ENCODE measurements at regions of chr7 and their contacts with region 1.

Region 1: GRCh38 chr7:103573479-103574058 is 127.6 kb upstream of the SLC26A5 start:
- DNase-seq: no peak
- H3K4me3 ChIP-seq: no peak overlapping the region
- H3K27ac ChIP-seq: no peak overlapping the region
- H3K4me1 ChIP-seq: peaks cover 0 to 6% (median 2%) of the 10 kb centered on the region in 4 donors
- H3K27me3 ChIP-seq: no peaks in the 10 kb centered on the region
- CTCF ChIP-seq: peak; percentile 54 to 69 (median 58)
- EP300 ChIP-seq: no peak
- POLR2A ChIP-seq: no peak

Region 2: GRCh38 chr7:104156842-104157277 is 583.3 kb after region 1 on chr7:
- in situ Hi-C with region 1: loop called in 1 of 4 experiments (anchors 25 kb)
- intact Hi-C with region 1: no loop called
- DNase-seq: no peak
- H3K4me3 ChIP-seq: no peak overlapping the region
- H3K27ac ChIP-seq: no peak overlapping the region
- H3K4me1 ChIP-seq: no peaks in the 10 kb centered on the region
- H3K27me3 ChIP-seq: no peaks in the 10 kb centered on the region
- CTCF ChIP-seq: peak in 4 of 5 experiments; percentile 31 to 42 (median 40)
- EP300 ChIP-seq: no peak
- POLR2A ChIP-seq: no peak

Region 3: GRCh38 chr7:104272767-104273384 is 699.3 kb after region 1 on chr7:
- in situ Hi-C with region 1: loop called in 1 of 4 experiments (anchors 25 kb)
- intact Hi-C with region 1: no loop called
- DNase-seq: no peak
- H3K4me3 ChIP-seq: no peak overlapping the region
- H3K27ac ChIP-seq: no peak overlapping the region
- H3K4me1 ChIP-seq: no peaks in the 10 kb centered on the region
- H3K27me3 ChIP-seq: no peaks in the 10 kb centered on the region
- CTCF ChIP-seq: peak; percentile 36 to 57 (median 50)
- EP300 ChIP-seq: no peak
- POLR2A ChIP-seq: no peak